ENCODE measurements at regions of chr7 and their contacts with region 1.

Region 1: GRCh38 chr7:137898839-137899721 is 52.3 kb upstream of the DGKI start:
- DNase-seq: peak; percentile 62
- H3K4me3 Mint-ChIP-seq: peak overlapping the region; percentile 8
- H3K27ac Mint-ChIP-seq: peak overlapping the region; percentile 37
- H3K4me1 Mint-ChIP-seq: peaks cover 47% of the 10 kb centered on the region
- H3K27me3 Mint-ChIP-seq: no peaks in the 10 kb centered on the region

Region 2: GRCh38 chr7:137606061-137606674 is 292.9 kb before region 1 on chr7:
- intact Hi-C with region 1: loop called (anchors 1 kb)
- DNase-seq: no peak
- H3K4me3 Mint-ChIP-seq: no peak overlapping the region
- H3K27ac Mint-ChIP-seq: no peak overlapping the region
- H3K4me1 Mint-ChIP-seq: no peaks in the 10 kb centered on the region
- H3K27me3 Mint-ChIP-seq: peaks cover 4% of the 10 kb centered on the region

Region 3: DNA sequence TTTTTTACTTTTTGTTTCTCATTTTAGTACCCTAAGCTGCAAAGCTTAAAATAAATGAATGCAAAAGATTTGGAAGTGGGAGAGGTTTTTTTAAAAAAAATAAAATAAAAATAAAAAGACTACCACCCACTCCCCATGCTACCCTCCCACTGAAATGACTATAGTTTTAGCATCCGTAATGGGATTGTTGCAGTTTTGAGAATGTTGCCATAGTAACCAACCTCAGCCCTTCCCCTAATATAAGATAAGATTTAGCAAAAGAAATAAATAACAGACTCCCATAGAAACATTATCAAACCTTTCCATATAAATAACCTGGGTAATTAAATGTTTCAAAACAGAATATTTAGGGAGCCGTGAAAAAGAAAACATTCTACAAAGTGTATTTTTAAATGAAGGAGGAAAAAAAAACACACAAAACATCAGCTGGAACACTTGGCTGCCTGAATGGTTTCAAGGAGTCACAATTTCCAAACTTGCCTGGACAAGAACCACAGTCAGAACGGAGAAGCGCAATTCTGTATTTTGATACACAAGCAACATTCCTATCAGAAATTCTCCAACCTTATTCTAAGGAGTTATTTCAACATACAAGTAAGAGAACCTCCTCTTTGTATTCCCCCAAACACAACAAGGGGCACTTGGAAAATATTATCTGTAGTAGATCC is 109.7 kb before region 1 on chr7:
- intact Hi-C with region 1: no loop called
- DNase-seq: no peak
- H3K4me3 Mint-ChIP-seq: no peak overlapping the region
- H3K27ac Mint-ChIP-seq: no peak overlapping the region
- H3K4me1 Mint-ChIP-seq: no peaks in the 10 kb centered on the region
- H3K27me3 Mint-ChIP-seq: no peaks in the 10 kb centered on the region

Region 4: DNA sequence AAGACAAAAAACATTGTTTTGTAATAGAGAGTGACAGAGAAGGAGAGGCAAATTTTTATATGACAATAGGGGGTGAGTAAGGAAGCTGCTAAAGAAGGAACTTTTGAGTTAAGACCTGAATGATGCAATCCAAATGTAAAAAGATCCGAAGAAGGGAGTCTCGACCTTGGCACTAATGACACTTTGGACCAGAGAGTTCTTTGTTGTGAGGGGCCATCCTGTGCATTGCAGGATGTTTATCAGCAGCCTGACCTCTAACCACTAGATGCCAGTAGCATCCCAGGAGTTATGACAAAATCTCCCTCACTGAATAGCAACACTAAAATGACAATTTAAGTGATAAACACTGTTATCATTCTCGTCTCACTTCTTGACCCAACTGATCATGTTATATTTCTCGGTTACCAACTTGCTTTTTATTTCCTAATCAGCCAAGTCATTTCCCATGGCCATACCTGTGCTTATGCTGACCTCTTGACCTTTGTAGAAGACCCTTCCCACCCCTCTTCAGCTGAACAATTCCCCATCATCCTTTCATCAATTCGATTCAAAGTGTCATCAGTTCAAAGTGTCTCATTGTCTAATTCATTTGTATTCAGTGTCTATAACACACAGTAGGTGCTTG is 82.3 kb before region 1 on chr7:
- intact Hi-C with region 1: loop called (anchors 1 kb)
- DNase-seq: no peak
- H3K4me3 Mint-ChIP-seq: no peak overlapping the region
- H3K27ac Mint-ChIP-seq: no peak overlapping the region
- H3K4me1 Mint-ChIP-seq: no peaks in the 10 kb centered on the region
- H3K27me3 Mint-ChIP-seq: no peaks in the 10 kb centered on the region

Region 5: GRCh38 chr7:137882261-137882668 is 16.8 kb before region 1 on chr7:
- intact Hi-C with region 1: loop called (anchors 1 kb)
- DNase-seq: peak; percentile 21
- H3K4me3 Mint-ChIP-seq: no peak overlapping the region
- H3K27ac Mint-ChIP-seq: peak overlapping the region; percentile 61
- H3K4me1 Mint-ChIP-seq: peaks cover 44% of the 10 kb centered on the region
- H3K27me3 Mint-ChIP-seq: no peaks in the 10 kb centered on the region

Region 6: DNA sequence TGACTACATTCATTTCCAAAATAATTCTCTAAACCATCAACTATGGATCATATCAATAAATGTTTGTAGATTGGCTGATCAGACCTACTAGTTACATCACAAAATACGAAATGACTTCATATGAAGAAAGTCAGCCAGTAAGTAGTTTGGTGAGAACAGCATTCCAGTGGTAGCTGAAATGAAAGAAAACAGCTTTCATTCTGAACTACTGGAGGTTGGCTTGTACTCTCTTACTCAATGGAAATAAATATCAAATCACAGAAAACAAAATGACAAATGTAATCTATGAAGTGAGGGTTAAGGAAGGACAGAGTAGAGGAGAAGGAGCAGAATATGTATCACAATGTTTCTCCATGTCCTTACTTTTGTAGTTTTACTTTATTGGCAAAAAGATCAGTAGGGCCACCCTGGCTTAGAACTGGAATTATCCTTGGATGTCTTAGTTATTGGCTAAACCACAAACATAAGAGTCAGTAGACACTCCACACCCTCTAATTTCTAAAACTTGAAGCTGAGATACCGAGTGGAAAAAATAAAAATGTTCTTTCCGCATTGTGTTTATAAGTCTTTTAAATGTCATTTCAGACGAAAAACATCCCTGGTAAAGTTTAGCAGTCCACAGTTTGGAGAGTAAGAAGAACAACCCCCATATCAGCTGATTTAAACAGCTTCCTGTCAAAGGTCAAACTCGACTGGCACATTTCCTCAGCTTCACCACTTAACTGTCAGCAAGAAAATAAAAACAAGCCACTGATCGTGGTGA is 21.7 kb after region 1 on chr7:
- intact Hi-C with region 1: no loop called
- DNase-seq: no peak
- H3K4me3 Mint-ChIP-seq: peak overlapping the region; percentile 48
- H3K27ac Mint-ChIP-seq: peak overlapping the region; percentile 86
- H3K4me1 Mint-ChIP-seq: peaks cover 55% of the 10 kb centered on the region
- H3K27me3 Mint-ChIP-seq: no peaks in the 10 kb centered on the region

Region 7: DNA sequence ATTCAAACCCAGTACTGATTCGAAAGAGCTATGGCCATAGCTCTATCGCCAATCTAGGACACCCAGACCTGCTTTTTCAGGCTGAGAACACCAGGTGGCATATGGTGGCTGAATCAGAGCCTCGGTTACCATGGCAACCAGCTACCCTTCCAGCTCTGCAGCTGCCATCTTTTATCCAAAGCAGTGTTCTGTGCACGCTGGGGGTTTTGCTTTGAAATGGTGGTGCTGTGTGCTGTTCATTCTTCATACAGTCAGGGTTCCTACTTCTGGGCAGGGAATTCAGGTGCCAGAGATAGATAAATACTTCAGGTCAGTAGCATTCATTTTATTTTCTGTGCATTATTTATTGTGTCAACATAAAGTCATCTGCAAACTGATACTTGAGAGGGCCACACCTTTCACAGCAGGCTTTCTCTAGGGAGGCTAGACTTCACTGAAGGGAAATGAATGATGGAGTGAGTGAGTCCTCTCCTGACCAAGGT is 262.6 kb after region 1 on chr7:
- intact Hi-C with region 1: loop called (anchors 10 kb)
- DNase-seq: peak; percentile 61
- H3K4me3 Mint-ChIP-seq: no peak overlapping the region
- H3K27ac Mint-ChIP-seq: no peak overlapping the region
- H3K4me1 Mint-ChIP-seq: no peaks in the 10 kb centered on the region
- H3K27me3 Mint-ChIP-seq: peaks cover 7% of the 10 kb centered on the region